Heart right ventricle (tissue), 16 donors: ENCODE measurements at regions of chr4 and their contacts with region 1.

Region 1: GRCh38 chr4:3461478-3462291 is 1.4 kb upstream of the DOK7 start:
- DNase-seq: peak; percentile 74 to 81
- ATAC-seq: peak; percentile 61 to 88 (median 79)
- H3K4me3 ChIP-seq: no peak overlapping the region
- H3K27ac ChIP-seq: peak overlapping the region; percentile 14 to 98 (median 91)
- H3K4me1 ChIP-seq: peaks cover 3 to 48% (median 15%) of the 10 kb centered on the region in 9 donors
- H3K27me3 ChIP-seq: peaks cover 0 to 49% (median 30%) of the 10 kb centered on the region in 7 donors
- CTCF ChIP-seq: no peak

Region 2: GRCh38 chr4:3442959-3443749 is 18.5 kb before region 1 on chr4:
- intact Hi-C with region 1: no loop called
- DNase-seq: peak in 1 of 2 donors; percentile 54
- ATAC-seq: peak; percentile 51 to 73 (median 62)
- H3K4me3 ChIP-seq: no peak overlapping the region
- H3K27ac ChIP-seq: no peak overlapping the region
- H3K4me1 ChIP-seq: peaks cover 0 to 5% (median 0%) of the 10 kb centered on the region in 9 donors
- H3K27me3 ChIP-seq: no peaks in the 10 kb centered on the region
- CTCF ChIP-seq: peak; percentile 94 to 100 (median 99)

Region 3: DNA sequence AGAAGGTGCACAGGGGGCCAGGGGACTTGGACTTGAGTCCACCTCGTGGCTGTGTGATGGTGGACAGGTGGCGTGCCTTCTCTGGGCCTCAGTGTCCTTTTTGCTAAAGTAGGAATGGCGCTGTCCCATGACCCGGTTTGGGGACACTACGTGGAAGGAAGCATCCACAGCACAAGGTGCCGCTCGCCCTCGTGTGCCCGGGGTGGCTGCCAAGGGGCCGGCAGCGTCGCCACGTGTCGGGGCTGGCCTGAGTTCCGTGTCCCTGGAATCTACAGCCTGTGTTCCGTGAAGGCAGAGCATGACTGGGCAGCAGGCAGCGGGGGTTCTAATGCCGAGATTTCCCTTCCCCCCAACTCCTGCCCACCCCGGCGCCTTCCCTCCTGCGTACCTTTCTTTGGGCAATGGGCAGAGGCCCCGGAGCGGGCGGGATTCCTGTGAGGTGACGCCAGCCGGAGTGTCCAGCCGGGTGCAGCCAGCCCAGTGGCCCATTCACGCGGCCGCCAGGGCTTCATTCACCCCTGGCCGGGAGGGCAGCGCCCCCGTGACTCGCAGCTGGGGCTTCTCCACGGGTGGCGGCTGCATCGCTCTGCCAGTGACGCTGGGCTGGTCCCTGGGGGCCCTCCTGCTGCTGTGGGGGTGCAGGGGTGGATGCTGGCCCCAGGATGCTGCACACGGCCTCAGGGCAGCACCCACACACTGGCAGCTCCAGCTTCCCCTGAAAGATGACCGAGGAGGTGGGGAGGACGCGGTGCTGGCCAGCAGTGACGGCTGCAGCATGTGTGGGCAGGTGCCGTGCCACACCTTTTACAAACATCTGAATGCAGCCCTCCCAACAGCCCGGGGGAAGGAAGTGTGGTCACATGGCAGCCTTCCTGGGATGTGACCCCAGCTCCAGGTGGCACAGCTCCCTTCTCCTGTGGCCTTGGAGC is 22.6 kb after region 1 on chr4:
- intact Hi-C with region 1: loop called in 1 of 10 experiments (anchors 1 kb)
- DNase-seq: peak; percentile 77 to 81
- ATAC-seq: peak; percentile 32 to 76 (median 60)
- H3K4me3 ChIP-seq: peak overlapping the region in 2 of 10 donors; percentile 7 to 14
- H3K27ac ChIP-seq: peak overlapping the region; percentile 71 to 100 (median 92)
- H3K4me1 ChIP-seq: peaks cover 18 to 85% (median 55%) of the 10 kb centered on the region in 9 donors
- H3K27me3 ChIP-seq: peaks cover 0 to 54% (median 44%) of the 10 kb centered on the region in 7 donors
- CTCF ChIP-seq: no peak